RWPE1 (cell line): ENCODE measurements at regions of chr4 and their contacts with region 1.

Region 1: GRCh38 chr4:38902695-38903094 is 35.1 kb downstream of the FAM114A1 start:
- DNase-seq: peak; percentile 51
- H3K27ac ChIP-seq: no peak overlapping the region
- CTCF ChIP-seq: no peak; the same call in 1 of the 2 replicates

Region 2: GRCh38 chr4:39103291-39103690 is 200.6 kb after region 1 on chr4:
- CTCF ChIA-PET with region 1: interaction called, 3 read pairs
- POLR2A ChIA-PET with region 1: interaction called, 11 read pairs
- DNase-seq: no peak
- H3K27ac ChIP-seq: no peak overlapping the region
- CTCF ChIP-seq: no peak

Region 3: GRCh38 chr4:39134683-39135319 is 232.1 kb after region 1 on chr4:
- CTCF ChIA-PET with region 1: interaction called, 14 read pairs
- POLR2A ChIA-PET with region 1: no interaction called
- DNase-seq: no peak
- H3K27ac ChIP-seq: no peak overlapping the region
- CTCF ChIP-seq: no peak